Activated CD4-positive, alpha-beta T cell treated with anti-CD3 and anti-CD28 coated beads for 36 hours (primary cell): ENCODE measurements at regions of chr10 and their contacts with region 1.

Region 1: GRCh38 chr10:112314822-112315474 is 31.7 kb downstream of the TECTB start:
- DNase-seq: peak; percentile 90
- ATAC-seq: peak; percentile 83
- H3K4me3 Mint-ChIP-seq: no peak overlapping the region
- H3K27ac Mint-ChIP-seq: no peak overlapping the region
- H3K4me1 Mint-ChIP-seq: no peaks in the 10 kb centered on the region
- H3K27me3 Mint-ChIP-seq: peaks cover 22% of the 10 kb centered on the region

Region 2: DNA sequence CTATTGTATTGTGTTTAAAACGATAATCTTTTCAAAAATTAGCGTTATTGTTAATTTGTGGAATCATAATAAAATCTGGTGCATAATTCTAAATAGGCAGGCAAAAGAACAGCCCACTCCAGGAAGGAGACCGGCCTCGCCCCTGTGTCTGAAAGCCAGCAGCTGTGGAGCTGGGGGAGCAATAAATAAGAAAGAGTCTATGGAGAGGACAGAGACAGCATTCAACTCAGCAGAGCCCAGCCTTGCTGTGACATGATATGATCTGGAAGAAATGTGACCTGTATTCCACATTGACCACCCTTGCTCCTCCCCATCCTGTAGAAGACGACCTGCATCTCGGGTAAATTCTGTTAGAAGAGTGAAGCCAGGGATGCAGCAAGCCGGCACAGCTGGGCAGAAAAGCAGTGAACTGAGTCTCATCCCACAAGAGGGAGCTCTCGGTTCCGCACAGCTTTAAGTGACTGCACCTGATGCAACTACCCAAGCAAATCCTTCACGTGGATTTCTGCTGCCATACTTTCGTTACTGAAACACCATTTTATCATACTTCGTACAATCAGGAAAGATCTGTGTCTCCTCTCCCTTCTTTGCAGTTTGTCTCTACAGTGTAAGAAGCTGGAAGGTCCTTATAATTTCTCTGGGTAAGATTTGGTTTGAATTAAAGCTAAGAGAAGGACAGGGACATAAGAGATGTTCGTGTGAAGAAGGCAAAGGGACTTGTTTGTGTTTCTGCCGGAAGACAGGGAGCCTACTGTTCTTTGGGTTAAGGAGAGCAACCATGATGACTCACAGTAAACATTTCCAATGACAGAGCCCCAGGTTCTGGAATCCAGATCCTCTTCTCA is 558.5 kb before region 1 on chr10:
- CTCF ChIA-PET with region 1: no interaction called
- POLR2A ChIA-PET with region 1: no interaction called
- intact Hi-C with region 1: loop called in 1 of 2 experiments (anchors 2 kb)
- DNase-seq: peak; percentile 49
- ATAC-seq: no peak
- H3K4me3 Mint-ChIP-seq: no peak overlapping the region
- H3K27ac Mint-ChIP-seq: no peak overlapping the region
- H3K4me1 Mint-ChIP-seq: no peaks in the 10 kb centered on the region
- H3K27me3 Mint-ChIP-seq: peaks cover 18% of the 10 kb centered on the region

Region 3: DNA sequence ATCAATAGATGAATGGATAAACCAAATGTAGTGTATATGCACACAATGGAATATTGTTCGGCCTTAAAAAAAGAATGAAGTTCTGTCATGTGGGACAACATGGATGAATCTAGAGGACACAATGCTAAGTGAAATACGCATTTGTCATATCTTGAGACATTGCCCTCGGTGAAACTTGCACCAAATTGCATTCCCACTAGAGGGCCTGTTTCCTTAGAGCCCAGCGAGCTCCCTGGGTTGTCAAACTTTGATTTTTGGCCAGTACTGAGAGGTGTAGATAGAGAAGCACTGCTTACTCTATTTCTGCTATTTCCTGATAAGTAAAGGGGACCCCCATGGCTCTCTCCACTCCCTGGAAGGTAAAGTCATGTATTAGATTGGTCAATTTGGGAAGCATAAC is 288.5 kb before region 1 on chr10:
- CTCF ChIA-PET with region 1: no interaction called
- POLR2A ChIA-PET with region 1: no interaction called
- intact Hi-C with region 1: no loop called
- DNase-seq: no peak
- ATAC-seq: no peak
- H3K4me3 Mint-ChIP-seq: no peak overlapping the region
- H3K27ac Mint-ChIP-seq: no peak overlapping the region
- H3K4me1 Mint-ChIP-seq: no peaks in the 10 kb centered on the region
- H3K27me3 Mint-ChIP-seq: no peaks in the 10 kb centered on the region

Region 4: GRCh38 chr10:112115799-112116385 is 199.1 kb before region 1 on chr10:
- CTCF ChIA-PET with region 1: interaction called, 5 read pairs
- POLR2A ChIA-PET with region 1: no interaction called
- intact Hi-C with region 1: loop called in 1 of 2 experiments (anchors 1 kb)
- DNase-seq: peak; percentile 68
- ATAC-seq: peak; percentile 66
- H3K4me3 Mint-ChIP-seq: no peak overlapping the region
- H3K27ac Mint-ChIP-seq: no peak overlapping the region
- H3K4me1 Mint-ChIP-seq: no peaks in the 10 kb centered on the region
- H3K27me3 Mint-ChIP-seq: no peaks in the 10 kb centered on the region

Region 5: GRCh38 chr10:112183329-112184051 is 131.5 kb before region 1 on chr10 and contains the start of gene GPAM:
- CTCF ChIA-PET with region 1: interaction called, 4 read pairs
- POLR2A ChIA-PET with region 1: no interaction called
- intact Hi-C with region 1: loop called in 1 of 2 experiments (anchors 2 kb)
- DNase-seq: peak; percentile 98
- ATAC-seq: peak; percentile 97
- H3K4me3 Mint-ChIP-seq: peak within 1 kb of the TSS; percentile 88
- H3K27ac Mint-ChIP-seq: peak within 1 kb of the TSS; percentile 88
- H3K4me1 Mint-ChIP-seq: peaks cover 27% of the 10 kb centered on the region
- H3K27me3 Mint-ChIP-seq: peaks cover 2% of the 10 kb centered on the region
- total RNA-seq, gene GPAM: 5.7 to 7.5 TPM

Region 6: DNA sequence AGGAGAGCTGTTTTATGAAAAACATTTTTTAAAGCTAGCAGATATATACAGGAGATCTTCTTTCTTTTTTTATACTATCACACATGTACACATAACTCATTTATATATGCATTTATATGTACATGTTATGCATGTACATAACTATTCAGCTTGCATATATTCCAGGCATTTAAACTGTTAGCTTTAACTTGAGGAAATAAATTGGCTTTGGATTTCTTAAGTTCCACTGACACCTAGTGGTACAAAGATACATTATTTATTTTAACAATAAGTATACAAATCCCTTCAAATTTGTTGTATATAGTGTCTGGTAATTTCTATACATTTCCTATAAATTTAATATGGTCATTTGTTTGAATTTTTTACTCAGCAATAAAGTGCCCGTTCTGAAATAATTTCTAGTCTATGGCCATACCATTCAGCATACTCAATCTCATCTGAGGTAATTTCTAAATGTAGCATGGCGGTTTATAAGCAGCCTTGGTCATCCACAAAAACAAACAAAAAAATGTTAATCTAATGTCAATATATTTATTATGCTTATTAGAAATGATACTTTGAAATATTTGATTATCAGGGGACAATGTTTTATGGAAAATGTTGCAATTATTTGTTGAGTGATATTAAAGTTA is 120.2 kb after region 1 on chr10:
- CTCF ChIA-PET with region 1: interaction called, 20 read pairs
- POLR2A ChIA-PET with region 1: no interaction called
- intact Hi-C with region 1: loop called (anchors 2 to 5 kb)
- DNase-seq: no peak
- ATAC-seq: no peak
- H3K4me3 Mint-ChIP-seq: no peak overlapping the region
- H3K27ac Mint-ChIP-seq: no peak overlapping the region
- H3K4me1 Mint-ChIP-seq: no peaks in the 10 kb centered on the region
- H3K27me3 Mint-ChIP-seq: no peaks in the 10 kb centered on the region